Breast epithelium (tissue), 4 donors: ENCODE measurements at regions of chr14 and their contacts with region 1.

Region 1: GRCh38 chr14:60599727-60600126 is 49.5 kb downstream of the SIX1 start:
- DNase-seq: no peak
- H3K4me3 ChIP-seq: no peak overlapping the region
- H3K27ac ChIP-seq: no peak overlapping the region
- H3K4me1 ChIP-seq: no peaks in the 10 kb centered on the region
- H3K27me3 ChIP-seq: no peaks in the 10 kb centered on the region
- CTCF ChIP-seq: no peak
- POLR2A ChIP-seq: no peak

Region 2: GRCh38 chr14:60670989-60671388 is 71.3 kb after region 1 on chr14:
- intact Hi-C with region 1: loop called (anchors 5 kb)
- DNase-seq: no peak
- H3K4me3 ChIP-seq: no peak overlapping the region
- H3K27ac ChIP-seq: no peak overlapping the region
- H3K4me1 ChIP-seq: no peaks in the 10 kb centered on the region
- H3K27me3 ChIP-seq: no peaks in the 10 kb centered on the region
- CTCF ChIP-seq: no peak
- POLR2A ChIP-seq: no peak